Uterus (tissue), 4 donors: ENCODE measurements at regions of chr19 and their contacts with region 1.

Region 1: DNA sequence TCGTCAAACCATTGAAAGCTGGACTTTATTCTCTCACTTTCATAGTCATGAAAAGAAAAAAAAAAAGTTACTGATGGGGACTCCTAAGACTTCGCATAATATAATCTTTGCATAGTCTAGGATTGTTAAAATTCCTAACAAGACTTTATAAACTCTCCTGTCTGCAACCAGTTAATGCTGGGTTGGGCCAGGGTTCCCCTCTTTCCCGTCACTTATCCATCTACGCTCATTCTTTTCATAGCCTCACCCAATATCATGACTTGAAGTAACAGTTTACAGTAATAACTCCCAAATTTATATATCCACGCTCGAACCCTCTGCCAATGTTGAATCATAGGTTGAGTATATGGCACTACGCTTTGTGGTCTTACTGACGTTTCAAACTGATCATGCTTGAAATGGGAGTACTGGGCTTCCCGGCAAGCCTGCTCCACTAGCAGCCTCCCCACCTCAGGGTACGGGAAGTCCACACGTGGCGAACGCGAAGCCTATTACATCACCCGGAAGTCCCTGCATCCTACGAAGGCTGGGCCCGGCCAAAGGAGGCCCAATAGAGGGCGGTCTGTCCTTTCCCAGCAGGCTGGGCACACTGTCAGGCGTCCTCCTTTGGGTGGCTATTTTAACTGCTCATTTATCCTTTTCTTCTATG is 743 bp upstream of the ZNF460 start:
- DNase-seq: peak; percentile 88 to 89
- H3K4me3 ChIP-seq: peak overlapping the region; percentile 99 to 100
- H3K27ac ChIP-seq: peak overlapping the region; percentile 98 to 99
- H3K4me1 ChIP-seq: no peaks in the 10 kb centered on the region
- H3K27me3 ChIP-seq: no peaks in the 10 kb centered on the region
- CTCF ChIP-seq: peak; percentile 7 to 37 (median 27)
- POLR2A ChIP-seq: peak in 1 of 2 donors; percentile 19

Region 2: DNA sequence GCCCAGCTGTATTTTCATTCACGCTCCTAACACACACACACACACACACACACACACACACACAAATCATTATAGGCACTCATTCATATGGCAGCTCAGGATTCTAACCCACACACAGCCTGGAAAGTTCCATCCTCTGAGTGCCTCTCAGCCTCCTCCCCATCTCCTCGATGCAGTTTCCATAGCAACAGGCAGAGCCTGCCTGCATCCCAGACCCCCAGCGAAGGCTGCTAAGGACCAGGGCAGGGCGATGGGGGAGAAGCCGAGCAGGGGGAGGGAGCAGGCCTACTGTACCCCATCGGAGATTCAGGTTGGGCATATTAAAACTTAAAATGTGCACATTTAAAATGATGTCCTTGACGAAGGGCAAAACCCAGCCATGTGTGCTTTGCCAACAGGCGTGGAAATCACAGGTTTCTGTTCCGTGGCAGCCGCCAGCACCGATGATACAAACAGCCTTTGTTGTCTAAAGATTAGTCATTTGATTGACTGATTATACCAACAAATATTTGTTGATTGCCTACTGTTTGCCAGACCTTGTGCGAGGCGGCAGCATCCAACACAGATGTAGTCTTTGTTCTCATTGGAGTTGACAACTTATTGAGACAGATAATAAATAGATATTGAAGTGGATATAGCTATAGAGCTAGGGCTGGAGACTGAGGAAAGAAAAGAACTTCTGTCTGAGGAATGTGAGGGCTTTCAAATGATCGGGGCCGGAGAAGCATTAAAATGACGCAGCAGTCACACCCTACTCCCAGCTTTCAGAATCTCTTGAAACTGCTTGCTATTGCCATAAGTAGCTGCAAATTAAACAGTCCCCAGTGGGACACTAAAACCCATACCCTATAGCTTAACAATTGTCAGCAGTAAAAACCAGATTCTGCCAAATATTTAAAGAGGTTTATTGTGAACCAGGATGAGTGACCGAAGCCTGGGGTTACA is 203.5 kb before region 1 on chr19:
- intact Hi-C with region 1: no loop called
- DNase-seq: no peak
- H3K4me3 ChIP-seq: no peak overlapping the region
- H3K27ac ChIP-seq: no peak overlapping the region
- H3K4me1 ChIP-seq: no peaks in the 10 kb centered on the region
- H3K27me3 ChIP-seq: no peaks in the 10 kb centered on the region
- CTCF ChIP-seq: no peak
- POLR2A ChIP-seq: no peak

Region 3: GRCh38 chr19:57240311-57241090 is 39.0 kb before region 1 on chr19 and contains the start of gene ZNF805:
- intact Hi-C with region 1: loop called (anchors 2 kb)
- DNase-seq: peak; percentile 95 to 96
- H3K4me3 ChIP-seq: peak within 1 kb of the TSS; percentile 70 to 81
- H3K27ac ChIP-seq: peak within 1 kb of the TSS; percentile 72 to 85
- H3K4me1 ChIP-seq: no peaks in the 10 kb centered on the region
- H3K27me3 ChIP-seq: no peaks in the 10 kb centered on the region
- CTCF ChIP-seq: peak in 2 of 4 experiments; percentile 2 to 22
- POLR2A ChIP-seq: peak; percentile 32 to 68
- total RNA-seq, gene ZNF805: 2.1 to 65.3 (median 18.9) TPM